Heart left ventricle (tissue), 16 donors: ENCODE measurements at regions of chr3 and their contacts with region 1.

Region 1: GRCh38 chr3:88618021-88618645 is 468.4 kb downstream of the C3orf38 start:
- DNase-seq: no peak
- ATAC-seq: no peak
- H3K4me3 ChIP-seq: no peak overlapping the region
- H3K27ac ChIP-seq: no peak overlapping the region
- H3K4me1 ChIP-seq: no peaks in the 10 kb centered on the region
- H3K27me3 ChIP-seq: no peaks in the 10 kb centered on the region
- CTCF ChIP-seq: no peak
- POLR2A ChIP-seq: no peak

Region 2: GRCh38 chr3:88678747-88679146 is 60.6 kb after region 1 on chr3:
- intact Hi-C with region 1: loop called in 1 of 10 experiments (anchors 10 kb)
- DNase-seq: no peak
- ATAC-seq: no peak
- H3K4me3 ChIP-seq: no peak overlapping the region
- H3K27ac ChIP-seq: no peak overlapping the region
- H3K4me1 ChIP-seq: no peaks in the 10 kb centered on the region
- H3K27me3 ChIP-seq: no peaks in the 10 kb centered on the region
- CTCF ChIP-seq: no peak
- POLR2A ChIP-seq: no peak

Region 3: DNA sequence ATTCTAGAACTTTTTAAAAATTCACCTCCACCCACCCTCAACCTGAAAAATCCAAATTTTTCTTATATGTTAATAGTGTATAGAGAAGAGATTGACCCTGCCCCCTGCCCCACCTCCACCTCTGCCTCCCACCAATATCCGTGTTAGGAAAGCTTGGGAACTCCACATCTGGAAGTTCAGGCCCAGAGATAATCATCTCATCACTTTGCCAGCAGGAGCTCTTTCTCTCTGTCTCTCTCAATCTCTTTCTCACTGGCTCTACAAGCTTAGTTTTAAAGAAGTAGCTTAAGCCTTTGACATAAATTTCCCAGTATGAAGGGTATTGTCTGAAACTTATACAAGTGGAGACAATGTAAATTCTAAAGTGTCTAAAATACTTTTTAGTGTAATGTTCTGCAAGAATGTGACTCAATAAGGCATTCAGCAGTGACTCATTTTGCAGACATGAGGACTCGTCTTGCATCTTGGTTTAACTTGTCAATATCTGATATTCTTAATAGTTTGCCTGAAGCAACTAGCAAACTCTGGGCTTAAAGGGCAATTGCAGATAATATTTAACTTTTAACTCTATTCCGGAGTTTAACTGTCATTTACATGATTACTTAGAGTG is 189.5 kb after region 1 on chr3:
- intact Hi-C with region 1: no loop called
- DNase-seq: no peak
- ATAC-seq: no peak
- H3K4me3 ChIP-seq: no peak overlapping the region
- H3K27ac ChIP-seq: no peak overlapping the region
- H3K4me1 ChIP-seq: peaks cover 0 to 6% (median 0%) of the 10 kb centered on the region in 12 donors
- H3K27me3 ChIP-seq: no peaks in the 10 kb centered on the region
- CTCF ChIP-seq: no peak
- POLR2A ChIP-seq: no peak